ENCODE measurements at regions of chr14 and their contacts with region 1.

Region 1: DNA sequence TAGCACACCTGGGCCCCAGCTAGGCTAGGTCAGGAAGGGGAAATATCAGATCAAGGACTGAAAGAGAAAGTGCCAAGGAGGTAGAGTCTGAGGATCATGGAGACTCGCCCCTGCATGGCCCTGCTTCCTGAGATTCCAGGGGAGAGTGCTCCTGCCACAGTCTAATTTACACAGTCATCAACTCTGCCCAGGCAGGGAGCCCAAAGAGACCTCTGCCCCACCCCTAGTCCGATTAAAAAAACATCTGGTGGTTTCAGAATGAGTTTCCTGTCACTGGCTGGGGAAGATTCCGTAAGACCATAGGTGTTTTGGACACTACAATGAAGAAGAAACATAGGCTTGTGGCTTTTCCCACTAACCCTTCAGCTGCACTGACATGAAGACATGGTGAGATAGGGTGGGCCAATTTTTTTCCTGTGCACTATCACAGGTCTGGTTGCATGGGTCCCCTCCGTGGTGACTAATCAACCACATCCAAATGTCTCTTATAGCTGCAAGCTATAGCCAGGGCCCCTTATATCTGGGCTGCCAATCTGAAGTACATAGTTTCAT is 31.5 kb upstream of the GZMB start:
- DNase-seq: no peak
- H3K4me3 ChIP-seq: no peak overlapping the region
- H3K27ac ChIP-seq: no peak overlapping the region
- H3K4me1 ChIP-seq: no peaks in the 10 kb centered on the region
- H3K27me3 ChIP-seq: no peaks in the 10 kb centered on the region
- CTCF ChIP-seq: no peak
- EP300 ChIP-seq: no peak
- RAD21 ChIP-seq: no peak

Region 2: GRCh38 chr14:24678801-24679247 is 13.3 kb after region 1 on chr14:
- CTCF ChIA-PET with region 1: interaction called, 10 read pairs
- POLR2A ChIA-PET with region 1: no interaction called
- DNase-seq: peak; percentile 70
- H3K4me3 ChIP-seq: peak overlapping the region; percentile 32 to 66; a peak in 3 of 4 replicates
- H3K27ac ChIP-seq: no peak overlapping the region
- H3K4me1 ChIP-seq: no peaks in the 10 kb centered on the region
- H3K27me3 ChIP-seq: peaks cover 7% of the 10 kb centered on the region; the same call in 1 of the 2 replicates
- CTCF ChIP-seq: peak; percentile 99
- EP300 ChIP-seq: no peak
- RAD21 ChIP-seq: peak; percentile 48

Measured in SK-N-SH (cell line).